Common myeloid progenitor, CD34-positive (primary cell): ENCODE measurements at regions of chr9 and their contacts with region 1.

Region 1: DNA sequence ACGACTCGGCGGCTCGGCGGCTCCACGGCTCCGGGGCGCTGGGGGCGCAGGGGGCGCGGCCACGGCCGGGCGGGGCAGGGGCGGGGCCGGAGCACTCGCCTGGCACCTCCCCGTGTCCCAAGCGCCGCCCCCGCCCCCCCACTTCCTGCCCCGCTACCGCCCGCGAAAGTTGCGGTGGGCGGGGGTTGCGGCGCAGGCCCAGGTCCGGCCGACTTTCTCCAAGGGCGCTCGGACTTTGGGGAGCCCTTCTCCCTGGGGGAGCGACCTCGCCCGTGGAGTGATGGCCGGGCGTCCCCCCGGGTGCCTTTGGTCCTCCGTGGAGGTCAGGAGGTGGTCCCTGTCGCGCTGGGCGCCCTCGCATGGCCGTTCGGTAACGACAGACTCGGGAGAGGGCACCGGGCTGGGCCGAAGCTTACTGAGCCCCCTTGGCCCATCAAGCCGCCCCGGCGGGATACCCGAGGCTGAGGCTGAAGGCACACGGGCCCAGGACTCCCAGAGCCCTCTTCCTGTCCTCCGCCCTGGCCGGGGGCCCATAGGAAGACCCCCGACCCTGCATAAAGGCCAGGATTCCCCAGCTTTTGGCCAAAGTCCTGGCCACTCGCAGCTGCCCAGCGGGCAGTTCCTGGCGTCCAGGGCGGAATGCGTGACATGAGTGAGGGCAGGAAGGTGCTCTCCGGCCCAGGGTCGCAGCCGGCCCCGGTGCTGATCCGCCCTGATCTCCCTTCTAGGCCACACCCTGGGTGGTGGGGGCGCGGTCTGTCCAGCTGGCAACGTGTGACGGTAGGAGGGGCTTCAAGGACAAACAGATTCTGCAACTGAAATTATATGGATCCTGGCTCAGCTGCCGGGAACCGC is 883 bp upstream of the VAV2 start:
- DNase-seq: peak in 2 of 3 donors; percentile 51 to 61
- H3K4me3 ChIP-seq: peak overlapping the region; percentile 41 to 78 (median 67)
- H3K27ac ChIP-seq: no peak overlapping the region
- H3K4me1 ChIP-seq: peaks cover 0 to 32% (median 30%) of the 10 kb centered on the region in 4 experiments
- H3K27me3 ChIP-seq: peaks cover 0 to 59% (median 31%) of the 10 kb centered on the region in 5 experiments

Region 2: DNA sequence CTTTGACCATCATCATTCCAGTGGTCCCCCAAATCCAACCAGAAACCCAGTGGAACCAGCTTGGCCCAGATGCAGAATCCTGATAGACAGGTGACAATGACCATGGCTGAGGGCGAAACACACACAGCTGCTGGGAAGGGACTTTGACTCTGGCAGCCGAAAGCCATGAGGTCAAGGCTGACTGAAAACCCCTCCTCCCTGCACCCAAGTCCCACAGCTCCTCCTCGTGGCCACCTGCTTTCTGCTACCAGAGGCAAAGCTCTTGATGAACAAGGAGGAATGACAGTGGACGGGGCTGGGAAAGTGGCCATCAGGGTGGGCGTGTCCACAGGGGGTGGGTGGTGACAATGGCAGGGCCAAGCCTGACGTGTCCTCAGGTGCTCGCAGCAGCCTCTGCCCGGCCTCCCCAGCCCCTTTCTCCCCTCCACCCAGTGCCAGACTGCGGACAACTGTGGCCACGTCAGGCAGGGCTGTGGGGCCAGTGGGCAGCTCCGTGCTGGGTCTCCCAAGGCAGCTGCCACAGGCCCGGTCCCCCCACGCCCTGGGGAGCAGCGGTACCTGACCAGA is 224.1 kb before region 1 on chr9:
- CTCF ChIA-PET with region 1: interaction called, 18 read pairs
- POLR2A ChIA-PET with region 1: no interaction called
- DNase-seq: peak in 1 of 3 donors; percentile 14
- H3K4me3 ChIP-seq: no peak overlapping the region
- H3K27ac ChIP-seq: no peak overlapping the region
- H3K4me1 ChIP-seq: no peaks in the 10 kb centered on the region
- H3K27me3 ChIP-seq: no peaks in the 10 kb centered on the region

Region 3: DNA sequence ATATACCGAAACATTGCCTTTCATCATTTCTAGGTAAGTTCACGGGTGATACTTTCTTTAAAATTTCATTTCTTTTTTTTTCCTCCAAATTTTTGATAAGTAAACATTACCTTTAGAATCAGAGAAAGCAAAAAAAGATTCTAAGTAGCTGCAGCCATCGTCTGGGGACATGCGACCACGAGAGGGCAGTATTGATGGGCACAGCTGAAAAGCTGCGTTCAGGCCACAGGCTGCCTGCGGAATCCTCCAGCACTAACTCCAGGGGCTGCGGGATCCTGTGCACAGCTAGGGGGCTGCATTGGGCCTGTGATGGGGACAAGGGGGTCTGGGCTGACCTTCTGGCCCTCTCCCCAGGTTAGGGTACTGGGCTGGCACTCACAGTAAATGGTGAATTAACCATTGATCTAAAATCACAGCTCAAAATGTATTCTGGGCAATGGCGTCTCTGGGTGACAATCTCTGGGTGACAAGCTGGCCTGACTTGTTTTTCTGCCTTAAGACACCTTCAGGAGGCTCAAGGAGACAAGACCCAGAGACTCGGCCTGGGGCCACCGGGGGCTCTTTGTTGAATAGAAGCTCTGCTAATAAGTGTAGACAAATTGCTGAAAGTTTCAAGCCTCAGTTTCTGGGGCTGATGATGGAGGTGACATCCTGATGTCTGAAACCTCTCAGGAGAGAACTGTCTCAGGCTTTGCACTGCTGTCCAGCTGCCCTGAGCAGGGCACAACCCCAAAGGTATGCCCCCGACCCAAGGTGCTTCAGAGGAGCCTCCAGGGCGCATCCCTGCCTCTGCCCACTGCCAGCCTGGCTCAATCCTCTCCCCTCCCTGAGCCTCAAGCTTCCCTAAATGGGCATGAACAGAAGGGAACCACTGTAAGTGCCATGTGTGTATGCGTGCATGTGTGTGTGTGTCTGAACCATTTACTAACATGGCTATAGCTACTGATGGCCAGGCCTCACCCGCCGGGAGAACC is 210.6 kb before region 1 on chr9:
- CTCF ChIA-PET with region 1: interaction called, 143 read pairs
- POLR2A ChIA-PET with region 1: interaction called, 6 read pairs
- DNase-seq: peak; percentile 73 to 91 (median 83)
- H3K4me3 ChIP-seq: no peak overlapping the region
- H3K27ac ChIP-seq: no peak overlapping the region
- H3K4me1 ChIP-seq: peaks cover 0 to 15% (median 3%) of the 10 kb centered on the region in 4 experiments
- H3K27me3 ChIP-seq: peaks cover 0 to 9% (median 0%) of the 10 kb centered on the region in 5 experiments

Region 4: GRCh38 chr9:133803028-133803585 is 189.9 kb before region 1 on chr9:
- CTCF ChIA-PET with region 1: interaction called, 15 read pairs
- POLR2A ChIA-PET with region 1: no interaction called
- DNase-seq: no peak
- H3K4me3 ChIP-seq: no peak overlapping the region
- H3K27ac ChIP-seq: no peak overlapping the region
- H3K4me1 ChIP-seq: no peaks in the 10 kb centered on the region
- H3K27me3 ChIP-seq: no peaks in the 10 kb centered on the region

Region 5: DNA sequence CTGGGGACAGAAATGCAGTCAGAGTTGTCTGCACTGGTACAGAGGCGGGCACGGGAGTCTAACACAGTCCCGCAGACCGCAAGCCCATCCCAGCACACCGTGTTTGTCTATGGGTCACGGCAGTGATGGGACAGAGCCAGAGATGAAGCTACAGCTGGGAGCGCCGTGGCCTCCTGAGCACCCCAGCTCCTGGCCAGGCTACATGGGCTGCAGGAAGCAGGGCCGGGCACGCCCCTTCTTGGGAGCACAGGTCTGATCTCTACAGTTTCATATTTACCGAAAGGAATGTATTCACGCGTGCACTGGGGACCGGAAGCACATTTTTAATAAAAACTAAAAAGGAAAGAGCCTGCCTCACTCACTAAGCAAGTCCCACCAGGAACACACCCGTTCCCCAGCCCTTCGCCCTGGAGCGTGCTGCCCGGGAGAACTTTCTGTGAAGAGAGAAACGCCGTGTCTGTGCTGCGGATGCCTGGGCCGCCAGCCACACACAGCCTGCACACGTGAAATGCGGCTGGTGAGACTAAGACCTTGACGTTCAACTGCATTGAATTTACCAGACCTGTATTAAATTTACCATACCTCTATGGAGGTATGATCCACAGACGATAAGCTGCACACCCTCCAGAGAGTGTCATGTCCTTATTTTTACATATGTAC is 82.0 kb before region 1 on chr9:
- CTCF ChIA-PET with region 1: no interaction called
- POLR2A ChIA-PET with region 1: no interaction called
- DNase-seq: no peak
- H3K4me3 ChIP-seq: no peak overlapping the region
- H3K27ac ChIP-seq: no peak overlapping the region
- H3K4me1 ChIP-seq: peaks cover 0 to 9% (median 6%) of the 10 kb centered on the region in 4 experiments
- H3K27me3 ChIP-seq: no peaks in the 10 kb centered on the region

Region 6: GRCh38 chr9:134024828-134025605 is 32.0 kb after region 1 on chr9 and contains the start of gene BRD3OS:
- CTCF ChIA-PET with region 1: interaction called, 10 read pairs
- POLR2A ChIA-PET with region 1: no interaction called
- DNase-seq: peak; percentile 99
- H3K4me3 ChIP-seq: peak within 1 kb of the TSS; percentile 50 to 91 (median 78)
- H3K27ac ChIP-seq: peak within 1 kb of the TSS in 1 of 2 experiments; percentile 58
- H3K4me1 ChIP-seq: peaks cover 0 to 15% (median 14%) of the 10 kb centered on the region in 4 experiments
- H3K27me3 ChIP-seq: no peaks in the 10 kb centered on the region

Region 7: DNA sequence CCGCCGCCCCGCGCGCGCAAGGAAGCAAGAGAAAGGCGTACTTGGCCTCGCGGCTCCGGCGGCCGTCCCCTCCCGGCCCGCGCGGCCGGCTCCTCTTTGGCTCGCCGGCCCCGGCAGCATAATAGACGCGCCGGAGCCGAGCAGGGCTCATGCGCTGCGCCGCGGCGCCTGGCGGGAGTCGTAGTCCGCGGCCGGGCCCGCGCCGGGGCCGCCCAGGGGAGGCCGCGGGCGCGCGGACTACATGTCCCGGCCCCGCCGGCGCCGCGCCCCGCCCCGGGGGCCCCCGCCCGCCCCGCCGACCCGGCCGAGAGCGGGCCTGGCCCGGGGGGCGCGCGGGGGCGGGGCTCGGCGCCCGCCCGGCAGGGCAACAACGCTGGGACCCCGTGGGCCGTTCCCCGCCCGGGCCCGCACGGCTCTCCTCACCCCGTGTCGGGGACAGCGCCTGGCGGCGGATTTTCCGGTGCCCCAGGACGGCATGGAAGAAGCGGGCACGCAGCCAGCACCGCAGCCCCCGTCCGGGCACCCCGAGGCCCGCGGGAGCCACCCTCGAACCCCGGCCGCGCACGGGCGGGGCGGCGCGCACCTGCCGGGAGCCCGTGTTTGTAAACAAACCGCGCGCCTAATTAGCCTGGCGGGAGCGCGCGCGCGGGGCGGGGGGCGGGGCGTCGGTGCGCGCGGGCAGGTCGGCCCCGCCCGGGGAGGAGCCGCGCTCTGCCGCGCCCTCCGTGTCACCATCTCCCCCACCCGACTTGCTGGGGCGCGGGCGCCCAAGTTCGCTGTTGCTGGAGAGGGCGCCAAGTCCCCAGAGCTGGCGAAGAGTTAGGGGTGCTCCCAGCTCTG is 75.1 kb after region 1 on chr9 and contains the start of gene BRD3:
- CTCF ChIA-PET with region 1: no interaction called
- POLR2A ChIA-PET with region 1: no interaction called
- DNase-seq: peak; percentile 87 to 94 (median 93)
- H3K4me3 ChIP-seq: peak within 1 kb of the TSS; percentile 71 to 92 (median 83)
- H3K27ac ChIP-seq: peak within 1 kb of the TSS; percentile 68 to 87
- H3K4me1 ChIP-seq: peaks cover 3 to 45% (median 39%) of the 10 kb centered on the region in 4 experiments
- H3K27me3 ChIP-seq: peaks cover 0 to 5% (median 0%) of the 10 kb centered on the region in 5 experiments